GM13977 (cell line): ENCODE measurements at regions of chr3 and their contacts with region 1.

Region 1: DNA sequence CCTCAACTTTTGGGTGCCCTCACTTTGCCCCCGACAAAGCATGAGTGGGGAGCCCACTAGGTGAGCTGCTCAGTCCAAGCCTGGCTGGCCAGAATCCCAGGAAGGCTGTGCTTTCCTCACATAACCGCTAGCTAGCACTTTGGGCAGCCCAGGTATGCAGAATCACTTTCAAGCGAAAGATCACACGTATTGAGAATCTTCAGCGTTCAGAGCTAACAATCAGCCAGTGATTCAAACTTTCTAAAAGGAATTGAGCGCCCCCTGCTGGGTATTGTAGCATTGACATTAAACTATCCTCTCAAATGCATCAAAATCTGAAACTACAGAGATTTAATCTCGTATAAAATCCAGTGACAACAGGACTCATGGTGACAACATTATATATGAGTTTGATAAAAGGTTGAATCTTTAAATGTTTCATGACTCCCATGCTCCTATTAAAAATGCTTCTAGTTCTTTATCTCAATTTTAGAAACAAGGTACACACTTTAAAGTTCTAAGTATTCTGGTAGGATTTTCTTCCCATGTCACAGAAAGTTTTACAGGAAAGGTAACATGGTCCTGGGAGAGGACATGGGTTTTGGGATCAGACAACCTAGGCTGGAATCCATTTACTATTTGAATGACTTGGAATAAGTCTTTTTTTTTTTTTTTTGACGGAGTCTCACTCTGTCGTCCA is 11.8 kb downstream of the ANAPC13 start:
- DNase-seq: peak; percentile 54
- CTCF ChIP-seq: peak; percentile 68

Region 2: GRCh38 chr3:133927540-133928066 is 546.4 kb before region 1 on chr3:
- in situ Hi-C with region 1: loop called (anchors 25 kb)
- DNase-seq: peak; percentile 92
- CTCF ChIP-seq: peak; percentile 92

Region 3: GRCh38 chr3:134212906-134213665 is 260.9 kb before region 1 on chr3:
- in situ Hi-C with region 1: loop called (anchors 10 kb)
- DNase-seq: peak; percentile 60
- CTCF ChIP-seq: peak; percentile 94

Region 4: GRCh38 chr3:134308350-134308891 is 165.6 kb before region 1 on chr3:
- in situ Hi-C with region 1: loop called (anchors 10 kb)
- DNase-seq: peak; percentile 79
- CTCF ChIP-seq: peak; percentile 95

Region 5: DNA sequence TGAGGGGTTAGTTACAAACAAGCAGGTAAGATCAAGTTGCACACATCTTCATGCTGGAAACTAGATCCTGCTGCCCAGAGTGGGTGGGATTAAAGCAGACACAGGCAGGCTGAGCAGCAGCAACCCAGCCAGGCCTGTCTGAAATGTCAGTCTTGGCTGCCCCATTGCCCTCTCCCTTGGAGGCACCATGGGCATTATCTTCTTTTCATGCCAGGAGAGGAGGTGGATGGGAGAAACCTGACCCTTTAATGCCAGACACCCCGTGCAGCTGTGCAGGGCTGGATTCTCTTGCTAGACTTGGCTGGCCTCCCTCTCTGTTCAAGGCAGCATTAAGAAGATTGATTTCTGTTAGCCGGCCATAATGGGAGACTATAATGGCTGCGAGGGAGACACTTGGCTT is 298.0 kb after region 1 on chr3:
- in situ Hi-C with region 1: no loop called
- DNase-seq: no peak
- CTCF ChIP-seq: no peak